Heart right ventricle (tissue), 16 donors: ENCODE measurements at regions of chr2 and their contacts with region 1.

Region 1: DNA sequence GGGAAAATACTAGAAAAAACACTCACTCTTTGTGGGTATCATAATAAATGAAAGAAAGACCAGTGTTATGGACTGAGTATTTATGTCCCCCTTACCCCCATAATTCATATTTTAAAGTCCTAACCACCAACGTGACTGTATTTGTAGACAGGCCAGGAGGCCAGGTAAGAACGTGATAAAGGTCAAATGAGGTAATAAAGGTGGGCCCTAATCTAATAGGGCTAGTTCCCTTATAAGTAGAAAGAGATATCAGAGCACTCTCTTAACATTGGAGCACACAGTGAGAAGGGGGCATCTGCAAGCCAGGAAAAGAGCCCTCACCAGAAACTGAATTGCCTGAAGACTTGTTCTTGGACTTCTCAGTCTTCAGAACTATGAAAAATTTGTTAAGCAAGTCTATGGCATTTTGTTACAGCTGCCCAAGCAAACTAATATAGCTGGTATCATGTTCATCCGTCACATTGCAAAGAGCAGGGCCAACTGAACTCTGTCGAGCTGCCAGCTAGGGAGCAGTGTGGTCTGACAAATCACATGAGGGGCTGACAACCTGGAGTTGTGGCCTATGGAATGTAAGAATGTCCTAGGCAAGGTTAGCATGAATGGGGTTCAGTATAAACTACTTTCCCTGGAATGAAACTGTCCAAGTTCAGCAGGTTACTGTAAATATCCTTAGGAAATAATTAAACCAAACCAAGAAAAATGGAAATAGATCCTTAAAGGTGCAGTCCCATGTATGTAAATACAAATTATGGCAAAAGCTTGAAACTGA is 280.9 kb downstream of the ZNF385B start:
- DNase-seq: peak; percentile 34
- ATAC-seq: peak in 7 of 8 donors; percentile 20 to 90 (median 80)
- H3K4me3 ChIP-seq: no peak overlapping the region
- H3K27ac ChIP-seq: peak overlapping the region in 3 of 10 donors; percentile 6 to 37 (median 11)
- H3K4me1 ChIP-seq: peaks cover 0 to 18% (median 0%) of the 10 kb centered on the region in 9 donors
- H3K27me3 ChIP-seq: no peaks in the 10 kb centered on the region
- CTCF ChIP-seq: peak in 2 of 9 donors; percentile 11 to 33

Region 2: DNA sequence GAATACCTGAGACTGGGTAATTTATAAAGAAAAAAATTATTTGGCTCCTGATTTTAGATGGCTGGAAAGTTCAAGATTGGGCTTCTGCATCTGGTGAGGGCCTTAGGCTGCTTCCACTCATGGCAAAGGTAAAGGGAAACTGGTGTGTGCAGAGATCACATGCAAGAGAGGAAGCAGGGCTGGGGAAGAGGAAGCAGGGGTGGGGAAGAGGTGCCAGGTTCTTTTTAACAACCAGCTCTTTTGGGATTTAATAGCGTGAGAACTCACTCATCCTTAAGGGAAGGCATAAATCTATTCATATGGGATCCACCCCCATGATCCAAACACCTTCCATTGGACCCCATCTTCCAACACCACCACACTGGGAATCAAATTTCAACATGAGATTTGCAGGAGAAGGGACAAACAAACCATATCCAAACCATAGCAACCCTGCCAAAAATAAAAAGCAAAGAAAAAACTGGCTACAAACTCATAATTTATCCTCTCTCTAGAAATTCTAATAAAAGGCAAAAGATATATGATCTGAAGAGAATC is 1160.0 kb before region 1 on chr2:
- intact Hi-C with region 1: loop called in 1 of 10 experiments (anchors 5 kb)
- DNase-seq: no peak
- ATAC-seq: no peak
- H3K4me3 ChIP-seq: no peak overlapping the region
- H3K27ac ChIP-seq: no peak overlapping the region
- H3K4me1 ChIP-seq: peaks cover 0 to 16% (median 1%) of the 10 kb centered on the region in 9 donors
- H3K27me3 ChIP-seq: no peaks in the 10 kb centered on the region
- CTCF ChIP-seq: no peak

Region 3: DNA sequence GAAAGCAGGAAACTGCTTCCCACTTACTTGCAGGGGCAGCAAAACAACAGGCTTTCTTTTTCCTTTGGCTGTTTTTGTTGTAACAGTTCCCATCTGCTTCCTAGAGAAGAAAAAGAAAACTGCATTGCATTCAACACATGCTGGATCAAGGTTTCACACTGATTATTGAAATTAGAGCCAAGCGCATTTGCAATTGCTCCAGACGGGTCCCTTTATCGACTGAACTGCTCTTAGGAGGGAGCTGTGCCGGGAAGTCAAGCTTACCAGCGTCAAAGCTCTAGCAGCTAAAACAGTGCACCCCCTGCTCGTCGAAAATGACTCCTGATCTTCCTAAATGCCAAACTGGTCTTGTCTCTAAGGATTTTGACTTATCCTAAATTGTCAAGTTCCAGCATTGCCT is 151.9 kb before region 1 on chr2:
- intact Hi-C with region 1: no loop called
- DNase-seq: no peak
- ATAC-seq: peak in 2 of 8 donors; percentile 12 to 67
- H3K4me3 ChIP-seq: peak overlapping the region in 3 of 10 donors; percentile 13 to 17 (median 13)
- H3K27ac ChIP-seq: no peak overlapping the region
- H3K4me1 ChIP-seq: peaks cover 0 to 8% (median 0%) of the 10 kb centered on the region in 9 donors
- H3K27me3 ChIP-seq: peaks cover 0 to 23% (median 9%) of the 10 kb centered on the region in 7 donors
- CTCF ChIP-seq: no peak

Region 4: DNA sequence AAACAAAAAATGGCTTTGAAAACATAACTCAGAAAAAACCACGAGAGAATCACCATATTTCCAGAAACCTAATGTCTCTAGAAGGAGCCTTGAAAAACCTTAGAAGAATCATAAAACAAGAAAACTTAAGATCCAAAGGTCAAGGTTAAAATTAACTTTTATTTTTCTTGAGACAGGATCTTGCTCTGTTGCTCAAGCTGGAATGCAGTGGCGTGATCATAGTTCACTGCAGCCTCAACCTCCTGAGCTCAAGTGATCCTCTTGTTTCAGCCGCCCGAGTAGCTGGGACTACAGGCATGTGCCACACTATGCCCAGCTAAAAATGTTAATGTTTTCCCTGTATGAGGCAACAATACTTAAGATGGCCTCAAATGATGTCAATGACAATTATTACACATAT is 61.7 kb before region 1 on chr2:
- intact Hi-C with region 1: no loop called
- DNase-seq: no peak
- ATAC-seq: no peak
- H3K4me3 ChIP-seq: no peak overlapping the region
- H3K27ac ChIP-seq: no peak overlapping the region
- H3K4me1 ChIP-seq: no peaks in the 10 kb centered on the region
- H3K27me3 ChIP-seq: no peaks in the 10 kb centered on the region
- CTCF ChIP-seq: no peak

Region 5: DNA sequence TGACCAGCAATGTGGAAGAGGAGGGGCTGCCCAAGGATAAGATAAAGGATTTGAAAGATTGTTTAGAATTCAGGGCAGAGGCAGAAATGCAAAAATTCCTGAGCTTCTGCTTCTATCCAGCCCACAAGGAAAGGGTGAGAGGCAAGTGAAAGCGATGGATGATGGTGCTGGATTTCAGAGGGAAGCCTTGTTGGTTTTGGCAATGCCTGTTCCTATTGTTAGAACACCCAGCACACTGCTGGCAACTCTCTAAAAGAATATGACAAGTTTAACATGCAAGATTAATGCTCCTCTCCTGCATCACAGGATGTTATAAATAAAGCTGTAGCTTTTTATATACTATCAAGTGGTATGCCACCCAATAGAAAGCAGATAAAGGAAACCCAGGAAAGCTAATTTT is 188.2 kb after region 1 on chr2:
- intact Hi-C with region 1: no loop called
- DNase-seq: peak in 1 of 2 donors; percentile 17
- ATAC-seq: peak; percentile 46 to 97 (median 86)
- H3K4me3 ChIP-seq: no peak overlapping the region
- H3K27ac ChIP-seq: peak overlapping the region in 3 of 10 donors; percentile 30 to 46 (median 45)
- H3K4me1 ChIP-seq: peaks cover 0 to 11% (median 3%) of the 10 kb centered on the region in 9 donors
- H3K27me3 ChIP-seq: no peaks in the 10 kb centered on the region
- CTCF ChIP-seq: no peak